ENCODE measurements at regions of chr3 and their contacts with region 1.

Region 1: GRCh38 chr3:56702490-56703315 is 19.6 kb upstream of the TASOR start:
- DNase-seq: peak; percentile 57
- H3K4me3 ChIP-seq: no peak overlapping the region
- H3K27ac ChIP-seq: no peak overlapping the region
- H3K4me1 ChIP-seq: no peaks in the 10 kb centered on the region
- H3K27me3 ChIP-seq: no peaks in the 10 kb centered on the region
- CTCF ChIP-seq: peak; percentile 75 to 94 (median 87)
- POLR2A ChIP-seq: no peak

Region 2: GRCh38 chr3:56801662-56802377 is 99.1 kb after region 1 on chr3 and contains the start of gene ARHGEF3:
- intact Hi-C with region 1: loop called (anchors 2 kb)
- DNase-seq: peak; percentile 82
- H3K4me3 ChIP-seq: peak within 1 kb of the TSS; percentile 59 to 69
- H3K27ac ChIP-seq: peak within 1 kb of the TSS; percentile 47 to 55
- H3K4me1 ChIP-seq: no peaks in the 10 kb centered on the region
- H3K27me3 ChIP-seq: no peaks in the 10 kb centered on the region
- CTCF ChIP-seq: peak in 2 of 4 experiments; percentile 30 to 33
- POLR2A ChIP-seq: peak; percentile 89
- total RNA-seq, gene ARHGEF3: 21.6 to 59.4 TPM

Region 3: GRCh38 chr3:56923521-56924224 is 221.0 kb after region 1 on chr3:
- intact Hi-C with region 1: loop called (anchors 5 kb)
- DNase-seq: peak; percentile 20
- H3K4me3 ChIP-seq: no peak overlapping the region
- H3K27ac ChIP-seq: peak overlapping the region in 1 of 2 donors; percentile 18
- H3K4me1 ChIP-seq: peaks cover 11% of the 10 kb centered on the region
- H3K27me3 ChIP-seq: no peaks in the 10 kb centered on the region
- CTCF ChIP-seq: no peak
- POLR2A ChIP-seq: no peak

Region 4: GRCh38 chr3:56988458-56989168 is 285.9 kb after region 1 on chr3:
- intact Hi-C with region 1: loop called (anchors 1 kb)
- DNase-seq: peak; percentile 83
- H3K4me3 ChIP-seq: no peak overlapping the region
- H3K27ac ChIP-seq: peak overlapping the region in 1 of 2 donors; percentile 41
- H3K4me1 ChIP-seq: peaks cover 8% of the 10 kb centered on the region
- H3K27me3 ChIP-seq: no peaks in the 10 kb centered on the region
- CTCF ChIP-seq: peak; percentile 62 to 91 (median 86)
- POLR2A ChIP-seq: no peak

Region 5: DNA sequence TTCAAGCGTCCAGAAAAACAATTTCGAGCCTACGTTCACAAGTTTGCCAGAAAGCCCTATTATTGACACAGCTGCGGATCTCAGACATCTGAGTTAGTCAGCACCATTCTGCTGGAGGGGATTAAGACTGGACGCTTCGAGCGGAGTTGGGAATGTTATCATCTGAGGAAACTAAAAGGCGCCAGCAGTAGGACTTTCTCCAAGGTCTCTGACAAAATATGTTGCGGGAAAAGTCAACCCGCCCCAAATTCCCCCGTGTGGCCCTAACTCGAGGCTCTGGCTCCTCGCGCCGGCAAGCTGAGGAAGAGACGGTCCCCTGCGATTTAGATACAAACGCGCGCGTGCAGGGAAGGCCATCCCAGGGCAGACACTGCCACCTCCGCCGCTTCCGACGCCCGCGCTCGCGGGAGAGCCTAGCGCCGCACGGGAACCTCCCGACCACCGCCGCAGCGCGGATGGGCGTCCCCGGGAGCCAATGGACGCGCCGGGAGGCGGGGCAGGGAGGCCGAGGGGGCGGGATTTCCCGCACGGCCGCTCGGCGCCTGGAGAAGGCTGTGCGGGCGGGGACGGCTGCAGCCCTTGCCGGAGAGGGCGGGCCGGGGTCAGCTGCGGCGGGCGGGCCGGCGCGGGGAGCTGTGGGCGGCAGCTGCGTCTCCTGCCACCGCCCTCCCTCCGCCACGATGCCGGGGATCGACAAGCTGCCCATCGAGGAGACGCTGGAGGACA is 524.7 kb after region 1 on chr3 and contains the start of gene APPL1:
- intact Hi-C with region 1: loop called (anchors 10 kb)
- DNase-seq: peak; percentile 91
- H3K4me3 ChIP-seq: peak within 1 kb of the TSS; percentile 82 to 83
- H3K27ac ChIP-seq: peak within 1 kb of the TSS; percentile 88 to 93
- H3K4me1 ChIP-seq: peaks cover 3% of the 10 kb centered on the region
- H3K27me3 ChIP-seq: no peaks in the 10 kb centered on the region
- CTCF ChIP-seq: peak in 1 of 4 experiments; percentile 25
- POLR2A ChIP-seq: peak; percentile 81
- total RNA-seq, gene APPL1: 32.3 to 47.3 TPM

Measured in prostate gland (tissue), 2 donors.